Adrenal gland (tissue), 19 donors: ENCODE measurements at regions of chr9 and their contacts with region 1.

Region 1: GRCh38 chr9:34651876-34652601 is at the start of gene IL11RA:
- DNase-seq: peak; percentile 89 to 96 (median 91)
- H3K4me3 ChIP-seq: peak within 1 kb of the TSS in 1 of 4 donors; percentile 30
- H3K27ac ChIP-seq: peak within 1 kb of the TSS; percentile 14 to 87 (median 69)
- H3K4me1 ChIP-seq: peaks cover 40 to 50% of the 10 kb centered on the region in 2 donors
- H3K27me3 ChIP-seq: no peaks in the 10 kb centered on the region
- CTCF ChIP-seq: no peak
- POLR2A ChIP-seq: peak in 1 of 2 donors; percentile 55
- total RNA-seq, gene IL11RA: 8.0 to 53.7 (median 14.2) TPM

Region 2: GRCh38 chr9:34446468-34446891 is 205.6 kb before region 1 on chr9:
- intact Hi-C with region 1: no loop called
- DNase-seq: no peak
- H3K4me3 ChIP-seq: no peak overlapping the region
- H3K27ac ChIP-seq: no peak overlapping the region
- H3K4me1 ChIP-seq: peaks cover 4 to 6% of the 10 kb centered on the region in 2 donors
- H3K27me3 ChIP-seq: no peaks in the 10 kb centered on the region
- CTCF ChIP-seq: no peak
- POLR2A ChIP-seq: no peak

Region 3: DNA sequence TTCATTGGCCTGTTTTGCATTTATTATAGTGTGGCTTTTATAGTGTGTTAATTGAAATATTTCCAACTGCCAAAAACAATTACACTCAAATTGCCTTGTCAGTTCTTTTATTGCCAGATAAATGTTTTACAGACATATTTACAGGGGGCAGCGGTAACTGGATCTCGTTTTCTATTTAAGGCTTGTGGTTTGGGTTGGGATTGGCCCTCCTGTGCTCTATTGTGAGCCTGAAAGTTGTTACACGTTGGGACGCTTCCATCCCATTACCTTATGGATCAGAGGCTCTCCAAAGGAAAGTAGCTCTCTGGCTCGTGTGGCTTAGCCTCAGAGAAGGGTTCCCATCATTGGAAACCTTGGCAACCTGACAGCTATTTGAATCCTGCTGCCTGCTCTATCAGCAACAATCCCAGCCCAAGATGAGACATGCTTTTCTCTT is 172.6 kb before region 1 on chr9:
- intact Hi-C with region 1: no loop called
- DNase-seq: no peak
- H3K4me3 ChIP-seq: no peak overlapping the region
- H3K27ac ChIP-seq: no peak overlapping the region
- H3K4me1 ChIP-seq: no peaks in the 10 kb centered on the region
- H3K27me3 ChIP-seq: no peaks in the 10 kb centered on the region
- CTCF ChIP-seq: no peak
- POLR2A ChIP-seq: no peak

Region 4: DNA sequence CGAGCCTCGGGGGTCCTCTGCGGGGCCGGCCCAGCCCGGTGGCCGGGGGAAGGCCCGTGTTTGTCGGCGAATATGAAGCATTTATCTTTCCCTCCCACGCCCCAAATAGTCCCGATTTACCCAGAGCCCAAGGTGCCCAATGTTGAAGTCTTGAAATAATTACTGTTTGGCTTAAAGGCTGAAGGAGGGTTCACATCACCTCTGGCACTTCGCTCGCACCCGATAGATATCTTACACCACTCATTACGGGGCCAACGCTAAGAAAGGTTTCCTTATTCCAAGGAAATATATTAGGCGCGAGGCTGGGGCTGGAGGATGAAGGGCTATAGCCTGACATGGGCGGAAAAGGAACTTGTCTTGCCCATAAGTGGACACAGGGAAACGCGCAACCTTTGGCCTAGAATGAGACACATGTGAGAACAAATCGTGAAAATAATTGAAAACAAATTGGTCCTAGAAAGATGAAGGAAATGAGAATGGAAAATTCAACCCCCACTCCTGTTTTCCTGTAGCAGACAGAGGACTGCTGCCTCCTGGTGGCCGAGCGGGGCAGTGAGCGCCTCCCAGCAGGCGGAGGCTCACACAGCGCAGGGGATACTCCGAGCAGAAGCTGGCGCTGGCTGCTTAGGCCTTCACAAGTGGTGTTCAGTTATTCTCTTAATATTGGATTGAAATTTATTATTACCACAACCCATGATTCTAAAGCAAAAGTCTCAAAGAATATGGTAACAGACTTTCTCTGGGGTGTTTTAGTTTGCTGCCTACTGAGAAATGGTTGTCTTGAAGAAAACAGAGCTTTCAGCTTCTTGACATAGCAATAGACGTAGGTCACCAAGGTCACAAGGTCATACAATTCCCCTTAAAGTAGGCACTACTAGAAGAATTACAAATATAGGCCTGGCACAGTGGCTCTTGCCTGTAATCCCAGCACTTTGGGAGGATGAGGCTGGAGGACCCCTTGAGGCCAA is 50.0 kb after region 1 on chr9:
- intact Hi-C with region 1: loop called in 1 of 2 experiments (anchors 10 kb)
- DNase-seq: peak; percentile 84 to 94 (median 87)
- H3K4me3 ChIP-seq: peak overlapping the region in 3 of 4 donors; percentile 51 to 74 (median 64)
- H3K27ac ChIP-seq: peak overlapping the region in 2 of 5 donors; percentile 64 to 68
- H3K4me1 ChIP-seq: peaks cover 0 to 6% of the 10 kb centered on the region in 2 donors
- H3K27me3 ChIP-seq: no peaks in the 10 kb centered on the region
- CTCF ChIP-seq: peak; percentile 92 to 99 (median 96)
- POLR2A ChIP-seq: peak in 1 of 2 donors; percentile 7